Sciatic nerve (tissue), 2 donors: ENCODE measurements at regions of chr1 and their contacts with region 1.

Region 1: DNA sequence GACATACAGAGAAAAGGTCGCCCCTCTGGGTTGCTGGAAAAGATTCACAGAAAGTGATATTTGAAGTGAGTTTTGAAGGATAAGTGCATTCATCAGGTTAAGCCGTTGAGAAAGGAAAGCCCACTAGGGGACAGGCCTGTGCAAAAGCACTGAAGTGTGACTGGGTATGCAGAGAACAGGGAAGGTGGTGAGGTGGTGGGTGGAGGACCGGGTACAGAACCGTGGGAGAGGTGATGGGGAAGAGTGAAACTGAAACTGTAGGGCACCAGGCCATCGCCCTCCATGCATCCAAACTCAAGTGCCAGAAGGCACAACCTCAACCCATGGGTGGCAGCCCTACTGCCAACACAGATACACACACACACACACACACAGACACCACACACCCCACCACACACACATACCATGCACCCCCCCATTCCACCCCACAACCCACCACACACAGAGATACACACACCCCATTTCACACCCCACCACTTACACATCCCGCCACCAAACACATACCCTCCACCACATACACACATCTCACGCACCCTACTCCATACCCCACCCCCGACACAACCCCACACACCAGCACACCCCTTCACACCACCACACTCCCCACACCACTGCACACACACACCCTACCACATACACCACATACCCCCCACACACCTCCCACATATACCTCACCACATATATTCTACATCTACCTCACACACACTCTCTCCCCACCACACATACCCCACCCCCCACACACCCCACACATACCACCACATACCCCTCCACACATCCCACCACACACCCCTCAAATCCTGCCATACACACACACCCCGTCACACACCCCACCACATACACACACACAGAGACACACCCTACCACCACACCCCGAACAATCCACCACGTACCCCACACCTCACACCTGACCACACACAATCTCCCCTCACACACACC is 59.0 kb downstream of the TSEN15 start:
- DNase-seq: no peak
- ATAC-seq: no peak

Region 2: DNA sequence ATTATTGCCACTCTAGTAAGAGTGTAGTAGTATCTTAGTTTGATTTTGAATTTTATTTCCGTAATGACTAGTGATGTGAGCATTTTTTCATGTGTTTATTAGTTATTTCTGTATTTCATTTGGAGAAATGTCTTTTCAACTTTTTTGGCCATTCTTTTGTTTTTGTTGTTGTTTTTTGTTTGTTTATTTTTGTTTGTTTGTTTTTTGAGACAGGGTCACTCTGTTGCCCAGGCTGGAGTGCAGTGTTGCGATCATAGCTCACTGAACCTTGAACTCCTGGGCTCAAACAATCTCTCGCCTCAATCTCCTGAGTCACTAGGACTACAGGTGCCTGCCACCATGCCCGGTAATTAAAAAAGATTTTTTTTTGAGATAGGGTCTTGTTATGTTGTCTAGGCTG is 17.0 kb after region 1 on chr1:
- intact Hi-C with region 1: loop called (anchors 1 kb)
- DNase-seq: no peak
- ATAC-seq: no peak